ENCODE measurements at regions of chr11 and their contacts with region 1.

Region 1: GRCh38 chr11:105799728-105800462 is 190.0 kb downstream of the GRIA4 start:
- DNase-seq: no peak
- H3K4me3 ChIP-seq: no peak overlapping the region
- H3K27ac ChIP-seq: no peak overlapping the region
- H3K4me1 ChIP-seq: no peaks in the 10 kb centered on the region
- H3K27me3 ChIP-seq: no peaks in the 10 kb centered on the region
- CTCF ChIP-seq: no peak
- POLR2A ChIP-seq: no peak

Region 2: DNA sequence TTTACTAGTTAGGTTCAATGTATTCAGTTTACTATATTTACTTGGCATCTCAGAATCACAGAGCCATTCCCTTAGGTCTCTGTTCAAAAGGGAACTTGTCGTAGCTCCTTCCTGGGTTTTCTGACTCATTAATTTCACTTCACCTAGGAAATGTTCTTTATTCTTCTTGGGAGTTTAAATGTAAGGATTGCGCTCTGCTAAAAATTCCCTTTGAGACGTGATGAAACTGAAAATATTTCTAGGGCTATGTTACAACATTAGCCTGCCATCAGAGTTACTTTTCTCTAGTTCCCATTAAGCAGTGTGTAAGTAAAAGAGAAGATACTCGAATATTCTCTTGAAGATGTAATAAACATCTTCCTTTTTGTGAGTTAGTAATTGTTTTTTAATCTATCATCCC is 1111.2 kb before region 1 on chr11:
- intact Hi-C with region 1: loop called (anchors 5 kb)
- DNase-seq: no peak
- H3K4me3 ChIP-seq: no peak overlapping the region
- H3K27ac ChIP-seq: no peak overlapping the region
- H3K4me1 ChIP-seq: no peaks in the 10 kb centered on the region
- H3K27me3 ChIP-seq: no peaks in the 10 kb centered on the region
- CTCF ChIP-seq: no peak
- POLR2A ChIP-seq: no peak

Measured in breast epithelium (tissue), 4 donors.